ENCODE measurements at regions of chr20 and their contacts with region 1.

Region 1: GRCh38 chr20:59495894-59496510 is 108.3 kb upstream of the PHACTR3 start:
- DNase-seq: peak in 2 of 3 donors; percentile 72 to 80
- ATAC-seq: peak; percentile 75
- H3K4me3 ChIP-seq: no peak overlapping the region
- H3K4me1 ChIP-seq: no peaks in the 10 kb centered on the region
- CTCF ChIP-seq: peak; percentile 72

Region 2: GRCh38 chr20:58727292-58727691 is 768.7 kb before region 1 on chr20:
- intact Hi-C with region 1: loop called in 1 of 2 experiments (anchors 5 kb)
- DNase-seq: no peak
- ATAC-seq: no peak
- H3K4me3 ChIP-seq: no peak overlapping the region
- H3K4me1 ChIP-seq: no peaks in the 10 kb centered on the region
- CTCF ChIP-seq: no peak

Region 3: GRCh38 chr20:59385480-59385879 is 110.5 kb before region 1 on chr20:
- intact Hi-C with region 1: no loop called
- DNase-seq: no peak
- ATAC-seq: peak; percentile 38
- H3K4me3 ChIP-seq: no peak overlapping the region
- H3K4me1 ChIP-seq: no peaks in the 10 kb centered on the region
- CTCF ChIP-seq: no peak

Measured in mucosa of descending colon (tissue), 3 donors.